ENCODE measurements at regions of chr17 and their contacts with region 1.

Region 1: DNA sequence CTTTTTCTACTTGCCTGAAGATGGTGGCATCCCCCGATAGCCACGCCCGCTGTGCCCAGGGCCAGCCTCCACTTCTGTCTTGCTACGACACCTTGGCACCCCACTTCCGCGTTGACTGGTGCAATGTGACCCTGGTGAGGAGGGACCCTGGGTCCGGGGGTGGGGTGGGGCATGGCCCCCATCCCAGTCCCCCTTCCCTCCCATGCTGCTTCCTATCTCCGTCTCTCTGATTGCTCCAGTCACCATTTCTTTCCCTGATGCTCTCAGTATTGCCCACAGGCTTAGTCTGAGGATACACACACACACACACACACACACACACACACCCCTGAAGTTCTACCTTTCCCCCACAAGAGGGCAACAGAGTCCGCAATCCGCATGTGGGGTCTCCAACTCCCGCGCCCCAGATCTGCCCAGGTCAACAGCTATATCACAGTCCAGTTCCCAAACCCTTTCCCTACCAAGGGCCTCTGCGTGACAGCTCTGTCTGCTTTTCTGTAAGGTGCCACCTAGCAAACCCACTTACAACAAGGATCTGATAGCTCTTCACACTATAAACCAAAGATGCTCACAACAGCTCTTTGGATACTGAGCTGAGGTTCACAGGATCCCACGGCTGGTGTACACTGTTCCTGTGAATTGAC is 3.4 kb downstream of the SGCA start:
- DNase-seq: peak; percentile 75

Region 2: GRCh38 chr17:50037321-50038071 is 131.7 kb before region 1 on chr17:
- CTCF ChIA-PET with region 1: no interaction called
- POLR2A ChIA-PET with region 1: no interaction called
- DNase-seq: no peak

Region 3: GRCh38 chr17:50047488-50048126 is 121.6 kb before region 1 on chr17:
- CTCF ChIA-PET with region 1: no interaction called
- POLR2A ChIA-PET with region 1: no interaction called
- DNase-seq: no peak

Region 4: DNA sequence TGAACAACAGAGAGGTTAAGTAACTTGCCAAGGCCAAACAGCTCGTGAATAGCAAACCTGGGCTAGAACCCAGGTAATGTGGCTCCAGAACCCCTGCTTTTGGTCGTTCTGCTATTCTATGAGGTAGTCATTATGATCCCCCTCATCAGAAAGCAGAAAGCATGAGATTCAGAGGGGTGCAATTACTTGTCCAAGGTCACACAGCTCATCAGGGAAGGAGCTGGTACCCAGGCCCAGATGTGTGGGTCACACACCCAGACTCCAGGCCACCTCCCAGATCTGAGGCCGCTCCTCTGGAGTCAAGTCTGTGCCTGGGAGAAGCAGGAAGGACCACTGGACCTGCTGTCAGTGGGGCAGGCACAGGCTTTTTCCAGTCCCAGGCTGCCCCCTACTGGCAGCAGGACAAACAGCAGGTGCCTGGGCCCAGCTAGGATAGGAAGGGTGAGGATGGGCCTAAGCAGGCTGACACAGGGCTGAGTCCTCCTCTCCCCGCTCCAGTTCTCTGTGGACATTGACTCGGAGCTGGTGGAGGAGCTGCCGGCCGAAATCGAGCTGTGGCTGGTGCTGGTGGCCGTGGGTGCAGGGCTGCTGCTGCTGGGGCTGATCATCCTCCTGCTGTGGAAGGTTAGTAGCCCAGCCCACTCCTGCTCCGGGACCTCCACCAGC is 81.9 kb before region 1 on chr17:
- CTCF ChIA-PET with region 1: no interaction called
- POLR2A ChIA-PET with region 1: no interaction called
- DNase-seq: peak; percentile 86

Region 5: DNA sequence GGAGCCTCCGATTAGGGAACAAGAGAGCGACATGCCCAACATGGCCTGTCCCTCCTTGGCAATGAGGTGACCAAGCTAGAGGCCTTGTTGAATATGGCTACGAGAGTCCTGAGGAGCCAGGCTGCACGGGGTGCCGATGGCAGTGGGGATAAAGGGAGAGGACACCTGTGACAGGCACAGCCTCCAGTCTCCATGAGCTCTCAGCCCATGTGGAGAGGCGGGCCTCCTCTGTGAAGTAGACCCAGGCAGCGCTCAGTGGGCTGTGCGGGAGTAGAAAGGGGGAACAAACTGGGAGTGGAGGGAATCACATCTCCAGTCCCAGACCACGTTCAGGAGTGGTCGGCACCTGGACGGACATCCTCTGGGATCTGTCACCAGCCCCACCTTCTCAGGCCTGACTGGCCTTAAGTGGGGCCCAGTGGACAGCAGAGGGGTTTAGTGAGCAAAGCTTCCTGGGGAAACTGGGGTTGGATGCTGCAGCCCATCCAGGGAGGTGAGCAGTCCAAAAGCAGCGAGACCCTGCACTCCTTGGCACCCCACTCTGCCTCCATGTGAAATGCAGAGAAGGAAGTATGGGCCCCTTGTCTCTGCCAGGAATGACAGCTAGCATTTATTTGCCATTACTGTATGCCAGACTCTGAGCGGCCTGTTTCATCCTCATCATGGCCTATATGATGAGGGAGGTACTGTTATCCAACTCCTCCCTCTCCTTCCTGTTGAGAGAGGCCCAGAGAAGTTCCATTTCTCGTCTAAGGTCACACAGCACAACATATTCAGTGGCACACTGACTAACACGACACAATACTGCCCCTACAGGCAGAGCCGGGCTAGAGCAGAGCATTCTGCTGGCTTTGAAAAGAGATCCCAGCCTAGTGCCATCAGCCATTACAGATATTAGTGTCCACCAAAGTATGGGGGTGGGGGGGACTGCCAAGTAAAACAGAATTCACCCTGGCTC is 100.5 kb after region 1 on chr17:
- CTCF ChIA-PET with region 1: interaction called, 10 read pairs
- POLR2A ChIA-PET with region 1: no interaction called
- DNase-seq: peak; percentile 81

Region 6: GRCh38 chr17:50297407-50297865 is 128.2 kb after region 1 on chr17:
- CTCF ChIA-PET with region 1: interaction called, 21 read pairs
- POLR2A ChIA-PET with region 1: no interaction called
- DNase-seq: peak; percentile 90

Region 7: DNA sequence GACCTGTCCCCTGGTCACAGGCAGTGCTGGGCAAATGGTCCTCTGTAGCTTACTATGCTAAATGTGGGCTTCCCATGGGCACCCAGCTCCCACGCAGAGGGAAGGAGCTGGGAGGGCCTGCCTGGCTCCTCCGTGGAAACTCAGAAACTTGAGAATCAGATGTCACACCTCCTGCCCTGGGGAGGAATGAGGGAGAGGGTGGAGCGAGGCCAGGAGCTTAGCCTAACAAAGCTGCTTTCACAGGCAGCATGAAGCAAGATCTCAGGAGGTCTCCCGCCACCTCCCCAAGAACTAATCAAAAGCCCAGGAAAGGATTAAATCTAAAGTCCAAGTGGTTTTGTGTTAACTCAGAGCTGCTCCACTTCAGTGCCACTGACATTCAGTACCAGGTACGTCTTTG is 143.1 kb after region 1 on chr17:
- CTCF ChIA-PET with region 1: no interaction called
- POLR2A ChIA-PET with region 1: no interaction called
- DNase-seq: no peak

Measured in HEK293T (cell line).